Activated CD8-positive, alpha-beta T cell treated with anti-CD3 and anti-CD28 coated beads for 36 hours (primary cell): ENCODE measurements at regions of chr7 and their contacts with region 1.

Region 1: DNA sequence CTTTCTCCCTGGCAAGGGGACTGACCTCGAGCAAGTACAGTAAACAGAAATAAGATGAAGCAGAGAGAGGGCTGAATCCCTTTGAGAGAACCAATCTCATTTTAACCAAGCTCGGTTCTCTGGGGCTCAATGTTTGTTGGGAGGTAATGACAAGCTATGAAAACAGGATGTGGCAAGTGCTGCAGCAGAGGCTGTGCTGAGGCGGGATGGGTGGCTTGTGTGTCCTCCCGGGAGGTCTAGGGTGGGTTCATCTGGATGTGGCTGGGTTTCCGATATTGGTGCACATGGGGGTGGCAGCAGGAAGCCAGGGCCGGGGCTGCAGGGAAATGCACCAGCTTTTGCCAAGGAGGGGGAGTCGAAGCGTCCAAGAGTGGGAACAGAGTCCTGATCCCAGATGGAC is 84.5 kb downstream of the AOAH start:
- DNase-seq: peak; percentile 74
- ATAC-seq: peak; percentile 90
- H3K4me3 Mint-ChIP-seq: peak overlapping the region; percentile 24
- H3K27ac Mint-ChIP-seq: peak overlapping the region; percentile 89
- H3K4me1 Mint-ChIP-seq: peaks cover 84% of the 10 kb centered on the region
- H3K27me3 Mint-ChIP-seq: no peaks in the 10 kb centered on the region
- CTCF ChIP-seq: no peak

Region 2: GRCh38 chr7:36651404-36651803 is 11.6 kb after region 1 on chr7:
- CTCF ChIA-PET with region 1: interaction called, 6 read pairs
- POLR2A ChIA-PET with region 1: interaction called, 13 read pairs
- intact Hi-C with region 1: no loop called
- DNase-seq: no peak
- ATAC-seq: no peak
- H3K4me3 Mint-ChIP-seq: no peak overlapping the region
- H3K27ac Mint-ChIP-seq: peak overlapping the region; percentile 17
- H3K4me1 Mint-ChIP-seq: peaks cover 49% of the 10 kb centered on the region
- H3K27me3 Mint-ChIP-seq: no peaks in the 10 kb centered on the region
- CTCF ChIP-seq: no peak